Naive thymus-derived CD4-positive, alpha-beta T cell (primary cell): ENCODE measurements at regions of chr2 and their contacts with region 1.

Region 1: GRCh38 chr2:70124983-70125480 is 37.8 kb downstream of the PCBP1 start:
- DNase-seq: peak in 6 of 9 donors; percentile 59 to 74 (median 70)
- ATAC-seq: peak; percentile 74
- H3K4me3 ChIP-seq: peak overlapping the region; percentile 92
- H3K4me3 Mint-ChIP-seq: peak overlapping the region; percentile 84 to 99 (median 96)
- H3K27ac ChIP-seq: peak overlapping the region; percentile 97
- H3K27ac Mint-ChIP-seq: peak overlapping the region; percentile 96 to 100 (median 99)
- H3K4me1 ChIP-seq: peaks cover 52 to 54% of the 10 kb centered on the region in 2 donors
- H3K4me1 Mint-ChIP-seq: peaks cover 46 to 82% (median 70%) of the 10 kb centered on the region in 7 donors
- H3K27me3 ChIP-seq: no peaks in the 10 kb centered on the region
- H3K27me3 Mint-ChIP-seq: no peaks in the 10 kb centered on the region

Region 2: GRCh38 chr2:69054431-69054830 is 1070.6 kb before region 1 on chr2:
- CTCF ChIA-PET with region 1: no interaction called
- POLR2A ChIA-PET with region 1: no interaction called
- intact Hi-C with region 1: no loop called
- DNase-seq: no peak
- ATAC-seq: no peak
- H3K4me3 ChIP-seq: no peak overlapping the region
- H3K4me3 Mint-ChIP-seq: no peak overlapping the region
- H3K27ac ChIP-seq: no peak overlapping the region
- H3K27ac Mint-ChIP-seq: no peak overlapping the region
- H3K4me1 ChIP-seq: no peaks in the 10 kb centered on the region
- H3K4me1 Mint-ChIP-seq: peaks cover 0 to 5% (median 0%) of the 10 kb centered on the region in 7 donors
- H3K27me3 ChIP-seq: peaks cover 0 to 2% of the 10 kb centered on the region in 2 donors
- H3K27me3 Mint-ChIP-seq: peaks cover 37 to 64% (median 55%) of the 10 kb centered on the region in 5 donors

Region 3: GRCh38 chr2:70024284-70024994 is 100.6 kb before region 1 on chr2:
- CTCF ChIA-PET with region 1: no interaction called
- POLR2A ChIA-PET with region 1: no interaction called
- intact Hi-C with region 1: no loop called
- DNase-seq: no peak
- ATAC-seq: no peak
- H3K4me3 ChIP-seq: no peak overlapping the region
- H3K4me3 Mint-ChIP-seq: no peak overlapping the region
- H3K27ac ChIP-seq: no peak overlapping the region
- H3K27ac Mint-ChIP-seq: peak overlapping the region in 3 of 9 donors; percentile 27 to 68 (median 55)
- H3K4me1 ChIP-seq: no peaks in the 10 kb centered on the region
- H3K4me1 Mint-ChIP-seq: peaks cover 0 to 24% (median 2%) of the 10 kb centered on the region in 7 donors
- H3K27me3 ChIP-seq: no peaks in the 10 kb centered on the region
- H3K27me3 Mint-ChIP-seq: no peaks in the 10 kb centered on the region

Region 4: DNA sequence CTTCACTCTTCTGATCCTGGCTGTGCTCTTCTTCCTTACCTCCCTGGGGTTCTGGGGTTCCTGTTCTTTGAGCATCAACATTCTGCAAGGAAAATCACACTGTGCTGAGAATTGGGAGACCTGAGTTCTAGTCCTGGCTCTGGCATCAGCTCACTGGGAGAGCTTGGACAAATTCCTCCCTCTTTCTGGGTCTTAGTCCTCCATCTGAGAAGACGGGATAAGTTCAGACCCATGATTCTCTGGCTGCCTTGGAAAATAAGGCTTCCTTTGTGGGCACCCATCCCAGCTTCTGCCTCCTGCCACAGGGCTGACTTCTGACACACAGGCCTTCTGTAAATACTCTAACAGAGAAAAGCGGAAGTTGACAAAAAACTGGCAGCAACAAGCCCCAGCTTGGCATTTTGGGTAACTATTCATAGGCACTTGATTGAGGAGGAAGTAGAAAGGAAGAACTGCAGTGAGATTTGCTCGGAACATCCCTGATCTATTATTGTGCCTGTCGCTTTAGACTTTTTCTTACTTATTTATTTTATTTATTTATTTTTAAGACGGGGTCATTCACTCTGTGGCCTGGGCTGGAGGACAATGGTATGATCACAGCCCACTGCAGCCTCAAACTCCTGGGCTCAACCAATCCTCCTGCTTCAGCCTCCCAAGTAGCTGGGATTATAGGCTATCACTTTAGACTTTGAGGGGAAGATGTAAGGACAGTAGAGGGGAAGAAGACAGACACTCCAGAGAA is 29.9 kb before region 1 on chr2:
- CTCF ChIA-PET with region 1: interaction called, 8 read pairs
- POLR2A ChIA-PET with region 1: interaction called, 1,973 read pairs
- intact Hi-C with region 1: loop called in 1 of 2 experiments (anchors 1 kb)
- DNase-seq: peak in 7 of 9 donors; percentile 65 to 85 (median 78)
- ATAC-seq: peak; percentile 93
- H3K4me3 ChIP-seq: peak overlapping the region; percentile 56
- H3K4me3 Mint-ChIP-seq: peak overlapping the region; percentile 76 to 90 (median 85)
- H3K27ac ChIP-seq: peak overlapping the region; percentile 91
- H3K27ac Mint-ChIP-seq: peak overlapping the region; percentile 91 to 100 (median 97)
- H3K4me1 ChIP-seq: peaks cover 39% of the 10 kb centered on the region in 2 donors
- H3K4me1 Mint-ChIP-seq: peaks cover 42 to 58% (median 48%) of the 10 kb centered on the region in 7 donors
- H3K27me3 ChIP-seq: no peaks in the 10 kb centered on the region
- H3K27me3 Mint-ChIP-seq: no peaks in the 10 kb centered on the region

Region 5: DNA sequence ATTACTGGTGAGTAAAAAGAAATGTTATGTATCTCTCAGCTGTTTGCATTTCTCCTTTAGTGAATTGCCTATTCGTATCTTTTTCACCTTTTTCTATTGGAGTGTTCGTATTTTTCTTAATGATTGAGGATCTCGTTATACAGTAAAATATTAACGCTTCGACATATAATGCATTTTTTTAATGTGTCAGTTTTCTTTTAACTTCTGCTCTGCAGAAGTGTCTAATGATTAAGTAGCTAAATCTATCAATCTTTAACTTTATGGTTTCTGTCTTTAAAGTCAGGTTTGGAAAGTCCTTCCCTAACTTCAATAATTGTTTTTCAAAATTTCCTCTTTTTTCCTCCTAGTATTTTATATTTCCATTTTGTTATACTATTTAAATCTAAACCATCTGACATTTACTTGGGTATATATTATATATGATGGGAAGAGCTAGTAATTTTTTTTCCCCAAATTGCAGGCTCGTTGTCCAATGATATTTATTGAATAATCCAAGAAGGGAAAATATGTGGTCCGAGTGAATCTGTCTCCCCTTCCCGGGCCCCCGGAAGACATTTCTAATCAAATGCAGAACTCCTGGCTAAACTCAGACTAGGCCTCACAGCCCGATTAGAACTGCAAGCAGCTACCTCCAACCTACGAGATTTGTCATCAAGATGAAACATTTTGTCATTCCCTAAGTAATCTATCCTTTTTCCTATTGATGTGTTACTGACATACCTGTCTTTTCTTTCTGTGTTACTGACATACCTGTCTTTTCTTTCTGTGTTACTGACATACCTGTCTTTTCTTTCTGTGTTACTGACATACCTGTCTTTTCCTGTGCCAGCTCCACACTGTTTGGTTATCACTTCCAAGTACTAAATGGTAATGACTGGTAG is 20.6 kb before region 1 on chr2:
- CTCF ChIA-PET with region 1: interaction called, 7 read pairs
- POLR2A ChIA-PET with region 1: interaction called, 356 read pairs
- intact Hi-C with region 1: loop called (anchors 1 kb)
- DNase-seq: peak in 4 of 9 donors; percentile 35 to 47 (median 46)
- ATAC-seq: no peak
- H3K4me3 ChIP-seq: peak overlapping the region; percentile 35
- H3K4me3 Mint-ChIP-seq: peak overlapping the region; percentile 60 to 87 (median 82)
- H3K27ac ChIP-seq: peak overlapping the region; percentile 72
- H3K27ac Mint-ChIP-seq: peak overlapping the region; percentile 88 to 97 (median 93)
- H3K4me1 ChIP-seq: peaks cover 37 to 45% of the 10 kb centered on the region in 2 donors
- H3K4me1 Mint-ChIP-seq: peaks cover 34 to 58% (median 55%) of the 10 kb centered on the region in 7 donors
- H3K27me3 ChIP-seq: no peaks in the 10 kb centered on the region
- H3K27me3 Mint-ChIP-seq: no peaks in the 10 kb centered on the region

Region 6: GRCh38 chr2:70137519-70137918 is 12.5 kb after region 1 on chr2:
- CTCF ChIA-PET with region 1: interaction called, 24 read pairs
- POLR2A ChIA-PET with region 1: interaction called, 570 read pairs
- intact Hi-C with region 1: loop called (anchors 1 kb)
- DNase-seq: peak in 3 of 9 donors; percentile 29 to 54 (median 40)
- ATAC-seq: no peak
- H3K4me3 ChIP-seq: no peak overlapping the region
- H3K4me3 Mint-ChIP-seq: peak overlapping the region; percentile 39 to 94 (median 80)
- H3K27ac ChIP-seq: peak overlapping the region; percentile 67
- H3K27ac Mint-ChIP-seq: peak overlapping the region; percentile 90 to 99 (median 96)
- H3K4me1 ChIP-seq: peaks cover 71 to 78% of the 10 kb centered on the region in 2 donors
- H3K4me1 Mint-ChIP-seq: peaks cover 64 to 90% (median 81%) of the 10 kb centered on the region in 7 donors
- H3K27me3 ChIP-seq: no peaks in the 10 kb centered on the region
- H3K27me3 Mint-ChIP-seq: peaks cover 0 to under 1% (median 0%) of the 10 kb centered on the region in 5 donors